ENCODE measurements at regions of chr11 and their contacts with region 1.

Region 1: GRCh38 chr11:35305670-35306382 is 113.5 kb downstream of the SLC1A2 start:
- DNase-seq: peak; percentile 32
- ATAC-seq: peak; percentile 86
- H3K4me3 Mint-ChIP-seq: peak overlapping the region; percentile 17
- H3K27ac Mint-ChIP-seq: peak overlapping the region; percentile 74
- H3K4me1 Mint-ChIP-seq: peaks cover 20% of the 10 kb centered on the region
- H3K27me3 Mint-ChIP-seq: no peaks in the 10 kb centered on the region
- CTCF ChIP-seq: peak; percentile 67

Region 2: GRCh38 chr11:34997952-34998528 is 307.8 kb before region 1 on chr11:
- CTCF ChIA-PET with region 1: interaction called, 13 read pairs
- POLR2A ChIA-PET with region 1: no interaction called
- intact Hi-C with region 1: no loop called
- DNase-seq: no peak
- ATAC-seq: peak; percentile 42
- H3K4me3 Mint-ChIP-seq: no peak overlapping the region
- H3K27ac Mint-ChIP-seq: no peak overlapping the region
- H3K4me1 Mint-ChIP-seq: peaks cover 25% of the 10 kb centered on the region
- H3K27me3 Mint-ChIP-seq: no peaks in the 10 kb centered on the region
- CTCF ChIP-seq: peak; percentile 90

Region 3: GRCh38 chr11:35232891-35233330 is 72.9 kb before region 1 on chr11:
- CTCF ChIA-PET with region 1: interaction called, 11 read pairs
- POLR2A ChIA-PET with region 1: no interaction called
- intact Hi-C with region 1: no loop called
- DNase-seq: no peak
- ATAC-seq: no peak
- H3K4me3 Mint-ChIP-seq: no peak overlapping the region
- H3K27ac Mint-ChIP-seq: no peak overlapping the region
- H3K4me1 Mint-ChIP-seq: peaks cover 52% of the 10 kb centered on the region
- H3K27me3 Mint-ChIP-seq: no peaks in the 10 kb centered on the region
- CTCF ChIP-seq: no peak

Region 4: DNA sequence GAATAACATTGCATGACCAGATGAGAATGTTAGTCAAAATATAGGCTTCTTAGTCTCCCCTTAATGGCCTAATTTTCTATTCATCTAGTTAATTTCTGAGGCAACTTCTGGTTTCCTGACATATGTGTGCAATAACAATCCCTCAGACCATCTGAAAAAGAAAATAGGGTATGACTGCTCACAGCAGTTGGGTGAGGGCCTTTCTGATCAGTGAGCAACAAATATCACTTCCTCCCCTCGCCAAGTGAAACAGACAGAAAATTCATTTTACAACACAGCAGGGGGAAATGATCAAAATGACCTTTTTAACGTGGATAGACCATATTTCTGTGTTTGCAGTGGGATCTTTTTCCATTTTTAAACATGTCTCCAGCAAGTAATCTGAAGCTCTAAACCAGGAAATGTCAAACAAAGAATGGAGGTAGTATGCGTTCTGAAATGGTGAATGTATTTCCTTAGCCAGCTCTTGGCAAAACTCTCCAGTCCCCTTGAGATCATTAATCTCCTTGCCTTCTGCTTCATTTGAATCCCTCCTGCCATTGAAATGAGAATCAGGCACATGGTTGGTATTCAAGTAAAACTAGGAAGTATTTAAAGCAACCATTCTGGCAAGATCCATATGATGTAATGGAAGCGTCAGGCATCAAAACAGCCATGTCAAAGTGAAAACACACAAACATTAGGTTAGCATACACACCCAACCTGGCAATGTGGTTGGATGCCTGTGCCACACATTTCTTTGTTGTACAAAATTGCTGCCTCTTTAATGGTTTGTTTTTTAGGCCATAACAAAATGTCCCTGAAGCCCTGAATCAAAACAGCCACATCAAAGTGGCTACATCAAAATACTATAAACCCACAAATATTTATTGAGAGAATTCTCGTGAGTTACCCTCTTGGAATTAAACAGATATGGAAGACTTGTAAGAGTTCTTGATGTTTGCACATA is 13.4 kb after region 1 on chr11:
- CTCF ChIA-PET with region 1: interaction called, 11 read pairs
- POLR2A ChIA-PET with region 1: interaction called, 3 read pairs
- intact Hi-C with region 1: no loop called
- DNase-seq: no peak
- ATAC-seq: no peak
- H3K4me3 Mint-ChIP-seq: no peak overlapping the region
- H3K27ac Mint-ChIP-seq: no peak overlapping the region
- H3K4me1 Mint-ChIP-seq: peaks cover 13% of the 10 kb centered on the region
- H3K27me3 Mint-ChIP-seq: no peaks in the 10 kb centered on the region
- CTCF ChIP-seq: no peak

Region 5: DNA sequence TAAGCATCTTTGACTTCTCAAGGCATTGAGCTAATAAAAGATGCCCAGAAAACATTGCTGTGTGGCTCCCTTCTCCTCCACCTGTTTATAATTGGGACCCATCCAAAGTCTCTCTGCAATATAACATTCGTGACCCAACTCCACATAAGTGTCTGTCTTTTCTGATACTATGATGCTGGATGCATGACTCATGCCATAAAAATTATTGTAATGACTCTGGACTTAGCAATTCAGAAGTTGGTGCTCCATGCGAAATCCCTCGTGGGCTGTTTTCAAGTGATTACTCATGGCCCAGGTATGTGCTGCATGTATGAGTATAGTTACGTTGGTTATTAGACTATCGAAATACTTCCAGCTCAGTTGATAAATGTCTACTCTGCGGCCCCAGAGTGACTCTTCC is 324.1 kb after region 1 on chr11:
- CTCF ChIA-PET with region 1: no interaction called
- POLR2A ChIA-PET with region 1: no interaction called
- intact Hi-C with region 1: no loop called
- DNase-seq: no peak
- ATAC-seq: no peak
- H3K4me3 Mint-ChIP-seq: no peak overlapping the region
- H3K27ac Mint-ChIP-seq: no peak overlapping the region
- H3K4me1 Mint-ChIP-seq: no peaks in the 10 kb centered on the region
- H3K27me3 Mint-ChIP-seq: peaks cover 46% of the 10 kb centered on the region
- CTCF ChIP-seq: no peak

Measured in activated CD8-positive, alpha-beta T cell treated with anti-CD3 and anti-CD28 coated beads for 36 hours (primary cell).